ENCODE measurements at regions of chr10 and their contacts with region 1.

Region 1: GRCh38 chr10:66917104-66917503 is 8.7 kb upstream of the LRRTM3 start:
- DNase-seq: no peak
- H3K4me3 ChIP-seq: no peak overlapping the region
- H3K27ac ChIP-seq: no peak overlapping the region
- H3K4me1 ChIP-seq: no peaks in the 10 kb centered on the region
- H3K27me3 ChIP-seq: no peaks in the 10 kb centered on the region
- CTCF ChIP-seq: no peak

Region 2: DNA sequence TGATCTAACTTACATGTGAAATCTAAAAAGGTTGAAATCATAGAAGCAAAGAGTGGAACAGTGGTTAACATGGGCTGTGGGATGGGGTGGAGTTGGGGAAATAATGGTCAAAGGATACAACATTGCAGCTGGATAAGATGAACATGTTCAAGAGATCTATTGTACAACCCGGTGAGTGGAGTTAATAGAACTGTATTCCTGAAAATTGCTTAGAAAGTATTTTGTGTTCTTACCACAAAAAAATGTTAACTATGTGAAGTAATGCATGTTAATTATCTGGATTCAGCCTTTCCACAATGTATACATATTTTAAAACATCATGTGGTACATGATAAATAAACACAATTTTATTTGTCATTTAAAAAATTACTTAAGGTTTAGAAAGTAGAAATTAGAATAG is 262.2 kb before region 1 on chr10:
- CTCF ChIA-PET with region 1: no interaction called
- POLR2A ChIA-PET with region 1: no interaction called
- intact Hi-C with region 1: no loop called
- DNase-seq: no peak
- H3K4me3 ChIP-seq: no peak overlapping the region
- H3K27ac ChIP-seq: no peak overlapping the region
- H3K4me1 ChIP-seq: no peaks in the 10 kb centered on the region
- H3K27me3 ChIP-seq: no peaks in the 10 kb centered on the region
- CTCF ChIP-seq: no peak

Region 3: GRCh38 chr10:66767707-66768106 is 149.4 kb before region 1 on chr10:
- CTCF ChIA-PET with region 1: no interaction called
- POLR2A ChIA-PET with region 1: interaction called, 19 read pairs
- intact Hi-C with region 1: no loop called
- DNase-seq: no peak
- H3K4me3 ChIP-seq: no peak overlapping the region
- H3K27ac ChIP-seq: no peak overlapping the region
- H3K4me1 ChIP-seq: no peaks in the 10 kb centered on the region
- H3K27me3 ChIP-seq: peaks cover 3% of the 10 kb centered on the region
- CTCF ChIP-seq: no peak